ENCODE measurements at regions of chr12 and their contacts with region 1.

Region 1: GRCh38 chr12:57583008-57583831 is 7.8 kb upstream of the PIP4K2C start:
- DNase-seq: peak; percentile 82
- ATAC-seq: peak; percentile 99
- H3K4me3 Mint-ChIP-seq: no peak overlapping the region
- H3K27ac Mint-ChIP-seq: no peak overlapping the region
- H3K4me1 Mint-ChIP-seq: peaks cover 4% of the 10 kb centered on the region
- H3K27me3 Mint-ChIP-seq: no peaks in the 10 kb centered on the region

Region 2: GRCh38 chr12:57377103-57377840 is 205.9 kb before region 1 on chr12:
- CTCF ChIA-PET with region 1: no interaction called
- DNase-seq: no peak
- ATAC-seq: no peak
- H3K4me3 Mint-ChIP-seq: no peak overlapping the region
- H3K27ac Mint-ChIP-seq: no peak overlapping the region
- H3K4me1 Mint-ChIP-seq: peaks cover 3% of the 10 kb centered on the region
- H3K27me3 Mint-ChIP-seq: no peaks in the 10 kb centered on the region

Region 3: GRCh38 chr12:57600395-57600794 is 17.2 kb after region 1 on chr12:
- CTCF ChIA-PET with region 1: interaction called, 77 read pairs
- DNase-seq: no peak
- ATAC-seq: no peak
- H3K4me3 Mint-ChIP-seq: no peak overlapping the region
- H3K27ac Mint-ChIP-seq: no peak overlapping the region
- H3K4me1 Mint-ChIP-seq: peaks cover 12% of the 10 kb centered on the region
- H3K27me3 Mint-ChIP-seq: no peaks in the 10 kb centered on the region

Region 4: GRCh38 chr12:57621497-57622292 is 38.5 kb after region 1 on chr12:
- CTCF ChIA-PET with region 1: interaction called, 148 read pairs
- DNase-seq: peak; percentile 59
- ATAC-seq: peak; percentile 83
- H3K4me3 Mint-ChIP-seq: peak overlapping the region; percentile 54
- H3K27ac Mint-ChIP-seq: no peak overlapping the region
- H3K4me1 Mint-ChIP-seq: peaks cover 24% of the 10 kb centered on the region
- H3K27me3 Mint-ChIP-seq: peaks cover 98% of the 10 kb centered on the region

Region 5: DNA sequence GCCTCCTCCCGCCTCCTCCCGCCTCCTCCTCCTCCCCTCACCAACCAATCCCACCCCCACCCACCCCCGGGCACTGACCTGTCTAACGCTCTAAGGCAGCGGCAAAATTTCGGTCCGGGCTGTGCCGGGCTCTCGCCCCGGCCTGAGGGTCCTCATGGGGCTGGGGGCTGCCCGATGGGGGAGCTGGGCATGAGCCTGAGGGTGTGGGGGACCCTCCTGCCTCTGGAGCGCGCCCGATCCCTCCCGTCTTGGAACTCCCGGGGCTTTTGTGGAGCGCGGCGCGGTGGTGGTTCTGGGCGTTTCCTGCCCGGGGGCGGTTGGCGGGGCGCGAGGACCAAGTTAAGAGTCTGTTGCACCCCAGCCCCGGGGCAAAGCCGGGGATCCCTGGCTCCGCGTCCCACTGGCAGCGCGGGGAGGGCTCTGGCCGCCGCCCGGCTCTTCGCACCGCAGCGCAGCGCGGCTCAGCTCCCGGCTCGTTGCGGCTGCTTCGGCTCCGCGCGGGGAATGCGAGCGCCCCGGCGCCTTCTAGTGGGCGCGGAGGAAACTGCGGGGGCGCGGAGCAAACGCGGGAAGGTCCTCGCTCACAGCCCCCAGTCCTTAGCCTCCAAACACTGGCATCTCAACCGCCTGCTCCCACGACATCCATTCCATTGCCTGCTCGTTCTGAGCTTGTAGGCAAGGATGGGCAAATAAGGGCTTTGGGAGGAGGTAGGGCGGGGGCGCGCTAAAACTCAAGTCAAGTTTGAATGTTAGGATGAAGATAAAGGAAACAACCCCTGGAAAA is 49.7 kb after region 1 on chr12 and contains the start of gene B4GALNT1:
- CTCF ChIA-PET with region 1: interaction called, 59 read pairs
- DNase-seq: peak; percentile 70
- ATAC-seq: peak; percentile 90
- H3K4me3 Mint-ChIP-seq: peak within 1 kb of the TSS; percentile 53
- H3K27ac Mint-ChIP-seq: no peak within 1 kb of the TSS
- H3K4me1 Mint-ChIP-seq: peaks cover 9% of the 10 kb centered on the region
- H3K27me3 Mint-ChIP-seq: peaks cover 63% of the 10 kb centered on the region
- total RNA-seq, gene B4GALNT1: 2.4 to 8.2 TPM

Region 6: GRCh38 chr12:57744777-57745484 is 161.7 kb after region 1 on chr12 and contains the start of gene TSPAN31:
- CTCF ChIA-PET with region 1: interaction called, 22 read pairs
- DNase-seq: peak; percentile 98
- ATAC-seq: peak; percentile 83
- H3K4me3 Mint-ChIP-seq: peak within 1 kb of the TSS; percentile 85
- H3K27ac Mint-ChIP-seq: peak within 1 kb of the TSS; percentile 95
- H3K4me1 Mint-ChIP-seq: peaks cover 49% of the 10 kb centered on the region
- H3K27me3 Mint-ChIP-seq: no peaks in the 10 kb centered on the region
- total RNA-seq, gene TSPAN31: 10.0 to 19.4 TPM

Measured in activated CD8-positive, alpha-beta memory T cell treated with anti-CD3 and anti-CD28 coated beads, Interleukin-2, amount 10 ng/mL, durations not matched to agents 7 days and 5 days (primary cell).